ENCODE measurements at regions of chr19 and their contacts with region 1.

Region 1: GRCh38 chr19:796692-797527 is at the start of gene PTBP1:
- DNase-seq: peak; percentile 99 to 100
- ATAC-seq: peak; percentile 87 to 95 (median 92)
- H3K4me3 ChIP-seq: peak within 1 kb of the TSS; percentile 61 to 95 (median 86)
- H3K27ac ChIP-seq: peak within 1 kb of the TSS; percentile 90 to 100 (median 98)
- H3K4me1 ChIP-seq: peaks cover 30 to 57% (median 54%) of the 10 kb centered on the region in 9 donors
- H3K27me3 ChIP-seq: no peaks in the 10 kb centered on the region
- CTCF ChIP-seq: peak in 7 of 9 donors; percentile 14 to 48 (median 29)
- total RNA-seq, gene PTBP1: 46.2 to 106 (median 56.8) TPM

Region 2: DNA sequence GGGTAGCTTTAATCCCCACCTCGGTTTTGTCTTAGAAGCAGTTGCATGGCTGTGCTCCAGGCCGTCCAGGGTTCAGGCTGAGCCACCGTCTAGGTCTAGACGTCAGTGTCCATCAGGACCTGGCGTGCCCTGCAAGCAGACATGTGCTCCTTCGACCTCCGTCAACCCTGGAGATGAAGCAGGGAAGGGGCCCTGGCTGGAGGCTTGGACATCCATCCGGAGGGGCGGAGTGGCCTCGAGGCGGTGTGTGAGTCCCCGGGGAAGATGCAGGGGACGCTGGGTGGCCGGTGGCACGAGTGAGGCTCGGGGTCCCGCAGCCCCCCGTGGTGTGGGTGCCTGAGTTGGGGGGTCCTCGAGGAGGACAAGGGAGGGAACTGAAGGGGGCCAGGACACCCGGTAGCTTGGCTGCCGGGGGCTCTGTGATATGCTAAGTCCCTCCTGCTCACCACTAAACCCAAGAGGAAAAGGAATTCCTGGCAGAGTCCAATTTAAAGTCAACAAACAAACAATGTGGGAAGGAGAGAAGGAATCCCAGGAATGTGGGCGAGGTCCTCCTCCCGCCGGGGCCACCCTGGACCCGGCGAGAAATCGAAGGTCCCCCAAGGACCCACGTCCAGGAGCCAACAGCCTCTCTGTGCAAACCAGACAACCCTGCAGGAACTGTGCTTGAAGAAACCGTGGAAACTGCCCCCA is 14.6 kb before region 1 on chr19:
- intact Hi-C with region 1: loop called in 1 of 10 experiments (anchors 2 kb)
- DNase-seq: no peak
- ATAC-seq: peak; percentile 41 to 76 (median 54)
- H3K4me3 ChIP-seq: peak overlapping the region; percentile 4 to 50 (median 34)
- H3K27ac ChIP-seq: peak overlapping the region; percentile 36 to 92 (median 78)
- H3K4me1 ChIP-seq: peaks cover 5 to 62% (median 22%) of the 10 kb centered on the region in 9 donors
- H3K27me3 ChIP-seq: peaks cover 0 to 4% (median 0%) of the 10 kb centered on the region in 7 donors
- CTCF ChIP-seq: no peak

Region 3: GRCh38 chr19:850221-850978 is 53.5 kb after region 1 on chr19:
- intact Hi-C with region 1: loop called in 1 of 10 experiments (anchors 10 kb)
- DNase-seq: peak; percentile 90 to 92
- ATAC-seq: peak; percentile 85 to 93 (median 90)
- H3K4me3 ChIP-seq: peak overlapping the region in 6 of 10 donors; percentile 0 to 21 (median 8)
- H3K27ac ChIP-seq: peak overlapping the region; percentile 60 to 84 (median 79)
- H3K4me1 ChIP-seq: peaks cover 7 to 34% (median 13%) of the 10 kb centered on the region in 9 donors
- H3K27me3 ChIP-seq: peaks cover 0 to 59% (median 52%) of the 10 kb centered on the region in 7 donors
- CTCF ChIP-seq: no peak